IMR-90 (cell line): ENCODE measurements at regions of chr13 and their contacts with region 1.

Region 1: DNA sequence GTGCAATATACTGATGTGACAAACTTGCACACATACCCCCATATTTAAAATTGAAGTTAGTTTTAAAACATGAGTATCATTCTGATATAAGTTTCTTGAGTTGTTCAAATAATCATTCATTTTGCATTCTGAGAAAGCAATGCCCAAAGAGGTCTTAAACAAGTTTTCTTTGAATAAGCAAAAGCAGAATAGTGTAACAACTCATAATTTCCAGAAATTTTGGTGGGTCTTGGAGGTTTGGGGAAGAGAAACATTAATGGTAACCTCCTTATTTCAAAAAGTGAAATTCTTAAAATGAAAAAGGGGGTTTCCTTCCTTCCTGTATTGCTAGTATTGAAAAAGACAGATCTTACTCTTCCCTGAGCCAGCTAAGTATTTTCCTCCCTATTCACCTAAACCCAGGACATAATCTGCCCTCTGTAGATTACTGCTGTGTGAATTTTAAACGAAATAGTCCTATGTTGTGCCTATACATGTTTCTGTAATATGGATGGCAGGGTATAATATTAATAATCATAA is 30.4 kb downstream of the SLC25A15 start:
- DNase-seq: no peak
- ATAC-seq: no peak
- H3K4me3 ChIP-seq: no peak overlapping the region
- H3K27ac ChIP-seq: no peak overlapping the region
- H3K4me1 ChIP-seq: no peaks in the 10 kb centered on the region
- H3K27me3 ChIP-seq: no peaks in the 10 kb centered on the region
- CTCF ChIP-seq: no peak
- POLR2A ChIP-seq: no peak
- RAD21 ChIP-seq: no peak

Region 2: DNA sequence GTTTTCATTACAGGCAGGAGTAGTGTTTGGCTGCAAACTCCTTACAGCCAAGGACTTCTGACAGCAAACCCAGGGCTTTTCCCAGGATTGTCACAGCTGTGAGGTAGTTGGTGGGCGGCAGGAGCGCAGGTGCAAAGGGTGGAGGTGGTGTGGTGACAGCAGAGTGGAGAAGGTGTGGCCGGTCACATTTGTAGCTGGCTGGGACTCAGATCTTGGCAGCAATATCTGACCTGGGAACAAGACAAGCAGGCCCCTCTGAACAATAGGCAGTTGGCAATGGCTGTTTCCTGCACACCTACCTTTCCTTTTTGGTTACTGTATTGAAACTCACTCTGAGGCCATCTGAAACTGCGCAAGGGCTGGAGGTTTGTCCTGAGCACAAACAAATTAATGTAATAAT is 837.1 kb before region 1 on chr13:
- CTCF ChIA-PET with region 1: no interaction called
- POLR2A ChIA-PET with region 1: no interaction called
- dilution Hi-C with region 1: no loop called
- in situ Hi-C with region 1: no loop called
- intact Hi-C with region 1: no loop called
- DNase-seq: no peak
- ATAC-seq: no peak
- H3K4me3 ChIP-seq: no peak overlapping the region
- H3K27ac ChIP-seq: no peak overlapping the region
- H3K4me1 ChIP-seq: no peaks in the 10 kb centered on the region
- H3K27me3 ChIP-seq: no peaks in the 10 kb centered on the region
- CTCF ChIP-seq: no peak
- POLR2A ChIP-seq: no peak
- RAD21 ChIP-seq: no peak

Region 3: DNA sequence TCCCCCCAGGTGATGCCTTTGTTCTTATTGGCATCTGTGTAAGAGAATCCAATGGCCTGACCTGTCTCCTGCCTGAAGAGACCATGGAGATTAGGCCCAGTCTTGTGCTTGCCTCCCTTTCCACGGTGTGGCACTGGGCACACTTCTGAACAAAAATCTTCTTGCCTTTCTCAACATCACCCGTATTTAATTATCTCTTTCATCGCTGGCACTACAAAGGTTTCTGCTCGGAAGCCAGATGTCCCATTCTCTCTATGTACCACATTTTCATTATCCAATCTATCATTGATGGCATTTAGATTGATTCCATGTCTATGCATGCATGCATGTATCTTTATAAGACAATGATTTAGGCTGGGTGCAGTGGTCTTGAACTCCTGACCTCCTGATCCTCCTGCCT is 43.9 kb after region 1 on chr13:
- CTCF ChIA-PET with region 1: no interaction called
- POLR2A ChIA-PET with region 1: no interaction called
- dilution Hi-C with region 1: no loop called
- in situ Hi-C with region 1: no loop called
- intact Hi-C with region 1: loop called (anchors 5 kb)
- DNase-seq: no peak
- ATAC-seq: no peak
- H3K4me3 ChIP-seq: no peak overlapping the region
- H3K27ac ChIP-seq: no peak overlapping the region
- H3K4me1 ChIP-seq: no peaks in the 10 kb centered on the region
- H3K27me3 ChIP-seq: no peaks in the 10 kb centered on the region
- CTCF ChIP-seq: no peak
- POLR2A ChIP-seq: no peak
- RAD21 ChIP-seq: no peak

Region 4: GRCh38 chr13:40895227-40896184 is 75.7 kb after region 1 on chr13:
- CTCF ChIA-PET with region 1: no interaction called
- POLR2A ChIA-PET with region 1: no interaction called
- dilution Hi-C with region 1: no loop called
- in situ Hi-C with region 1: no loop called
- intact Hi-C with region 1: no loop called
- DNase-seq: no peak
- ATAC-seq: no peak; the same call in none of the 2 replicates
- H3K4me3 ChIP-seq: no peak overlapping the region
- H3K27ac ChIP-seq: no peak overlapping the region
- H3K4me1 ChIP-seq: no peaks in the 10 kb centered on the region
- H3K27me3 ChIP-seq: no peaks in the 10 kb centered on the region
- CTCF ChIP-seq: no peak
- POLR2A ChIP-seq: no peak
- RAD21 ChIP-seq: no peak

Region 5: DNA sequence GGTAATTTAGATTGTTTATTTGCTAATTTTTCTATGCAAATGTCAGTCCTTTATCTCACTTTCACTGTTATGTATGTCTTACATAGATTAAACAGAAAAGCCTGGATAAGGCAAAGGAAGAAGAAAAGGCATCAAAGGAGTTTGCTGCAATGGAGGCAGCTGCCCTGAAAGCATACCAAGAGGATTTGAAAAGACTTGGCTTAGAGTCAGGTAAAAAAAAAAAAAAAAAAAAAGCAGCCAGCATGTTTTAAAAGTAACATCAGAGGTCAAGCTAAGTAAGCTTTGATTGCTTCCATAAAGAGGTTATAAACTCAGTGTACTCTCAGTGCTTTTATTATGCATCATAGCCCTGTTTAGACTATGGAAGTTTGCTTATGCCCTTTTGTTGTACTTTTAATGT is 245.2 kb after region 1 on chr13:
- CTCF ChIA-PET with region 1: no interaction called
- POLR2A ChIA-PET with region 1: no interaction called
- dilution Hi-C with region 1: no loop called
- in situ Hi-C with region 1: no loop called
- intact Hi-C with region 1: no loop called
- DNase-seq: peak; percentile 92
- ATAC-seq: peak; percentile 7; the same call in 1 of the 2 replicates
- H3K4me3 ChIP-seq: no peak overlapping the region
- H3K27ac ChIP-seq: peak overlapping the region; percentile 56; the same call in 1 of the 2 replicates
- H3K4me1 ChIP-seq: peaks cover 3% of the 10 kb centered on the region; the same call in 1 of the 2 replicates
- H3K27me3 ChIP-seq: no peaks in the 10 kb centered on the region
- CTCF ChIP-seq: no peak
- POLR2A ChIP-seq: no peak
- RAD21 ChIP-seq: no peak